ENCODE measurements at regions of chr3 and their contacts with region 1.

Region 1: GRCh38 chr3:157767602-157768001 is 264.4 kb upstream of the VEPH1 start:
- DNase-seq: no peak
- H3K4me3 ChIP-seq: no peak overlapping the region
- H3K27ac ChIP-seq: no peak overlapping the region
- H3K4me1 ChIP-seq: peaks cover 8% of the 10 kb centered on the region
- H3K27me3 ChIP-seq: no peaks in the 10 kb centered on the region
- CTCF ChIP-seq: peak in 1 of 2 donors; percentile 37

Region 2: GRCh38 chr3:157512534-157512933 is 255.1 kb before region 1 on chr3:
- CTCF ChIA-PET with region 1: interaction called, 11 read pairs
- dilution Hi-C with region 1: no loop called
- in situ Hi-C with region 1: no loop called
- intact Hi-C with region 1: no loop called
- DNase-seq: no peak
- H3K4me3 ChIP-seq: no peak overlapping the region
- H3K27ac ChIP-seq: no peak overlapping the region
- H3K4me1 ChIP-seq: no peaks in the 10 kb centered on the region
- H3K27me3 ChIP-seq: no peaks in the 10 kb centered on the region
- CTCF ChIP-seq: no peak

Region 3: DNA sequence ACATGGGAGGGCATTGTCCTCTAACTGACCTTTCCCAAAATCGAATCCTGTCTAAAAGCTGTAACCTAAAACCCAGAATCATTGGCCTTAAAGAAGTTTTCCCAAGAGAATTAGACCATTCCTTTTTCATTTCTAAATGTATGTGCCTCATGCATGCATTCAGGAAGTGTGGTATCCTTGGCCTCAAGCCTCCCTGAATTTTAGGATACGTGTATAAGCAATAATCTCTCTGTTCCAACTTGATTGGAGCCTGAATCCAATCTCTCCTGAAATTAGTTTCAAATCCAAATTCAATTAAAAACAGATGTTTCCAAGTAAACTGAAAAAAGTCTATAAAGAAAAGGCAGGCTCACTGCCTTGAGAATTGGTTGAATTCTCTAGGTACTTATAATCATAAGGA is 178.4 kb before region 1 on chr3:
- CTCF ChIA-PET with region 1: no interaction called
- dilution Hi-C with region 1: no loop called
- in situ Hi-C with region 1: no loop called
- intact Hi-C with region 1: no loop called
- DNase-seq: no peak
- H3K4me3 ChIP-seq: no peak overlapping the region
- H3K27ac ChIP-seq: no peak overlapping the region
- H3K4me1 ChIP-seq: no peaks in the 10 kb centered on the region
- H3K27me3 ChIP-seq: no peaks in the 10 kb centered on the region
- CTCF ChIP-seq: no peak

Measured in mammary epithelial cell (primary cell).